Calu3 (cell line): ENCODE measurements at regions of chr10 and their contacts with region 1.

Region 1: DNA sequence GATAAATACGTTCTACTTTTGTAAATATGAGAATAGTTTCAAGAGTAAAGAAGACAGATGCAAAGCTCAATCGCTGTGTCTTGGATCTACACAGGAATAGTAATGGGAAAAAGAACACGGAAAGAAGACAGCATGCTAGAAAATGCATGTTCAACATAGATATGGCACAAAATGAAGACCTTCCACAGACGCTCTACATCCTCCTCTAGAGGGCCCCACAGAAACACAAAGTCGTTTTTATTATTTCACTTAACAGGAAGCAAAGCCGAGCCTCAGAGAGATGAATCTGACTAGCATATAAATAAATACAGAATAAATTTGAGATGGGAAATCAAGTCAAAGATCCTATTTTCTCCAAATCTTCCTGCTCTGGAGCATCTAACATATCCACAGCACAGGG is 292.6 kb downstream of the PARD3 start:
- DNase-seq: no peak
- H3K4me3 Mint-ChIP-seq: no peak overlapping the region
- H3K27ac Mint-ChIP-seq: no peak overlapping the region
- H3K4me1 Mint-ChIP-seq: peaks cover 80% of the 10 kb centered on the region
- H3K27me3 Mint-ChIP-seq: no peaks in the 10 kb centered on the region
- CTCF ChIP-seq: no peak

Region 2: GRCh38 chr10:34584164-34584563 is 61.6 kb after region 1 on chr10:
- CTCF ChIA-PET with region 1: no interaction called
- intact Hi-C with region 1: loop called (anchors 5 kb)
- DNase-seq: no peak
- H3K4me3 Mint-ChIP-seq: no peak overlapping the region
- H3K27ac Mint-ChIP-seq: no peak overlapping the region
- H3K4me1 Mint-ChIP-seq: peaks cover 27% of the 10 kb centered on the region
- H3K27me3 Mint-ChIP-seq: no peaks in the 10 kb centered on the region
- CTCF ChIP-seq: no peak

Region 3: DNA sequence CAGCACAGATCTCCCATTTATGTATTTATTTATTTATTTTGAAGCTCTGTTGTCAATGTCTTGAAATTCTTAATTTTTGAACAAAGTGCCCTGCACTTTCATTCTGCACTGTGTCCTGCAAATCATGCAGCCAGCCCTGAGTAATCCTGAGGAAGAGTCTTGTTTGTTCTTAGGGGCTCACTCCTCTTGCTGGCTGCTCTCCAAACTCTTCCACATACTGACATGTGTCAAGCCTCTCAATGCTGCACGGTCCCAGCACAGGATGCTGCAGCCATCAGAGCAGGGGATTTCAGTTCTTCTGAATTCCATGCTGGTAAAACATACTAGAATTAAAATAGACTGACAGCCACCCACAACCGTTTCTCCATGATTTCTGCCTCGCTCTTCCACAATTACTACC is 85.3 kb after region 1 on chr10:
- CTCF ChIA-PET with region 1: no interaction called
- intact Hi-C with region 1: no loop called
- DNase-seq: no peak
- H3K4me3 Mint-ChIP-seq: no peak overlapping the region
- H3K27ac Mint-ChIP-seq: no peak overlapping the region
- H3K4me1 Mint-ChIP-seq: no peaks in the 10 kb centered on the region
- H3K27me3 Mint-ChIP-seq: no peaks in the 10 kb centered on the region
- CTCF ChIP-seq: no peak